WTC11 (cell line): ENCODE measurements at regions of chr1 and their contacts with region 1.

Region 1: GRCh38 chr1:237041795-237042525 is at the start of gene RYR2:
- DNase-seq: peak; percentile 84
- ATAC-seq: peak; percentile 83
- H3K4me3 Mint-ChIP-seq: peak within 1 kb of the TSS; percentile 79
- H3K27ac Mint-ChIP-seq: no peak within 1 kb of the TSS
- H3K4me1 Mint-ChIP-seq: peaks cover 19% of the 10 kb centered on the region
- H3K27me3 Mint-ChIP-seq: peaks cover 36% of the 10 kb centered on the region
- CTCF ChIP-seq: no peak
- total RNA-seq, gene RYR2: 5.9 to 7.9 TPM (median 6.0 TPM) in 3 replicates

Region 2: DNA sequence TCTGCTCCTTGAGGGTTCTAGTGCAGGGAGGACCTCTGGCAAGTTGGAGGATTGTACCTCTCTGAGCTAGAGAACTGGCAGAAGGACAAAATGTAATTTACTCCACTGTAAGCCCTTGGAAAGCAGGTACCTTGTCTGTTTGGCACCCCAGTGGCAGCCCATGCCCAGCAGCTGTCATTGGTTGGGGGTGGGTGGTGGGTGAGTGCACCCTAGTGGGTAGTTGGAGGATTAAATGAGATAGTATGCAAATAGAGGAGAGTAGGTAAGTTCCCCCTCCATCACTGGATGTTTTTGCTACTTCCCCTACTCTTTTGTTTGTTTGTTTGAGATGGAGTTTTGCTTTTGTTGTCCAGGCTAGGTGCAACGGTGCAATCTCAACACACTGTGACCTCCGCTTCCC is 69.8 kb after region 1 on chr1:
- CTCF ChIA-PET with region 1: interaction called, 10 read pairs
- POLR2A ChIA-PET with region 1: no interaction called
- DNase-seq: no peak
- ATAC-seq: no peak
- H3K4me3 Mint-ChIP-seq: no peak overlapping the region
- H3K27ac Mint-ChIP-seq: no peak overlapping the region
- H3K4me1 Mint-ChIP-seq: peaks cover 42% of the 10 kb centered on the region
- H3K27me3 Mint-ChIP-seq: no peaks in the 10 kb centered on the region
- CTCF ChIP-seq: no peak

Region 3: GRCh38 chr1:237124856-237125462 is 83.0 kb after region 1 on chr1:
- CTCF ChIA-PET with region 1: interaction called, 11 read pairs
- POLR2A ChIA-PET with region 1: no interaction called
- DNase-seq: no peak
- ATAC-seq: peak; percentile 76
- H3K4me3 Mint-ChIP-seq: no peak overlapping the region
- H3K27ac Mint-ChIP-seq: peak overlapping the region; percentile 58; the same call in 1 of the 2 replicates
- H3K4me1 Mint-ChIP-seq: peaks cover 7% of the 10 kb centered on the region; the same call in 1 of the 2 replicates
- H3K27me3 Mint-ChIP-seq: no peaks in the 10 kb centered on the region
- CTCF ChIP-seq: 0 out of 2 replicates have a peak, but pooled peaks have one; percentile 27

Region 4: DNA sequence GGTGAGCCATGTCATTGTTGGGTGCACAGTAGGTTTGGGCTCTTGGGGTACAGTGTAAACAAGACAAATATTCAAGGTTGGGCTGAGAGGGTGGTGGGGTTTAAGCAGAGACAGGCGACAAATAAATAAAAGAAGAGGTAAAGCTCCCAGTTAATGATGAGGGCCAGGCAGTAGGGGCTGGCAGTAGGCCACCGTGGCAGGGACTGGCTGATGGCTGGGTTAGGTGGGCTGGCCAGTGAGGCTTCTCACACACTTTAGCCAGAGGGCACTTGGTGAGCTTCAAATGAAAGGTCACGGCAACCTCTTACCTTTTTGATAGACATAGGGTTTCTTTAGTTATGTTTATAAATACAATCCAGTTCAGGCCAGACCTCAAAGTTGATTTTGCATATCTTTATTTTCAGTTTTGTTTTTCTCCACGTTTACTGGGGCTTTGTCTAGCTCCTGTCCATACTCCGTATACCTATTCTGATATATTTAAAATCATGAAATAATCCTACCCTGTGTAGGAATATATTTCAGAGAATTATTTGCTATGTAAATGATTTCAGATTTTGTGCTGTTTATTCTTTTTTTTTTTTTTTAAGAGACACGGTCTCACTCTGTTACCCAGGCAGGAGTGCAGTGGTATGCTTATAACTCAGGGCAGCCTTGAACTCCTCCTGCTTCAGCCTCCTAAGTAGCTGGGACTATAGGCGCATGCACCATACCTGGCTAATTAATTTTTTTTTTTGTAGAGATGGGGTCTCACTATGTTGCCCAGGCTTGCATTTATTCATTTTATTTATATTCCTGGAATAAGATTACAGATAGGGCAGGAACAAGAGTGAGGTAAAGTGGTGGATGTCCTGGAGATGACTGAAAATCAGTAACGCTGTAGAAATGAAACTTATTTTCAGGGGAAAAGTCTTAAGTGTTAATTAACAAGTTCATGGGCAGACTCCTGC is 122.7 kb after region 1 on chr1:
- CTCF ChIA-PET with region 1: no interaction called
- POLR2A ChIA-PET with region 1: interaction called, 10 read pairs
- DNase-seq: no peak
- ATAC-seq: no peak; the same call in 1 of the 2 replicates
- H3K4me3 Mint-ChIP-seq: no peak overlapping the region
- H3K27ac Mint-ChIP-seq: 0 out of 2 replicates have a peak overlapping the region, but pooled peaks have one; percentile 13
- H3K4me1 Mint-ChIP-seq: peaks cover 41% of the 10 kb centered on the region
- H3K27me3 Mint-ChIP-seq: no peaks in the 10 kb centered on the region
- CTCF ChIP-seq: no peak

Region 5: GRCh38 chr1:237386362-237387143 is 344.6 kb after region 1 on chr1:
- CTCF ChIA-PET with region 1: interaction called, 15 read pairs
- POLR2A ChIA-PET with region 1: no interaction called
- DNase-seq: no peak
- ATAC-seq: peak; percentile 67
- H3K4me3 Mint-ChIP-seq: no peak overlapping the region
- H3K27ac Mint-ChIP-seq: peak overlapping the region; percentile 55; the same call in 1 of the 2 replicates
- H3K4me1 Mint-ChIP-seq: peaks cover 13% of the 10 kb centered on the region
- H3K27me3 Mint-ChIP-seq: no peaks in the 10 kb centered on the region
- CTCF ChIP-seq: peak; percentile 47; the same call in 1 of the 2 replicates